ENCODE measurements at regions of chr10 and their contacts with region 1.

Region 1: DNA sequence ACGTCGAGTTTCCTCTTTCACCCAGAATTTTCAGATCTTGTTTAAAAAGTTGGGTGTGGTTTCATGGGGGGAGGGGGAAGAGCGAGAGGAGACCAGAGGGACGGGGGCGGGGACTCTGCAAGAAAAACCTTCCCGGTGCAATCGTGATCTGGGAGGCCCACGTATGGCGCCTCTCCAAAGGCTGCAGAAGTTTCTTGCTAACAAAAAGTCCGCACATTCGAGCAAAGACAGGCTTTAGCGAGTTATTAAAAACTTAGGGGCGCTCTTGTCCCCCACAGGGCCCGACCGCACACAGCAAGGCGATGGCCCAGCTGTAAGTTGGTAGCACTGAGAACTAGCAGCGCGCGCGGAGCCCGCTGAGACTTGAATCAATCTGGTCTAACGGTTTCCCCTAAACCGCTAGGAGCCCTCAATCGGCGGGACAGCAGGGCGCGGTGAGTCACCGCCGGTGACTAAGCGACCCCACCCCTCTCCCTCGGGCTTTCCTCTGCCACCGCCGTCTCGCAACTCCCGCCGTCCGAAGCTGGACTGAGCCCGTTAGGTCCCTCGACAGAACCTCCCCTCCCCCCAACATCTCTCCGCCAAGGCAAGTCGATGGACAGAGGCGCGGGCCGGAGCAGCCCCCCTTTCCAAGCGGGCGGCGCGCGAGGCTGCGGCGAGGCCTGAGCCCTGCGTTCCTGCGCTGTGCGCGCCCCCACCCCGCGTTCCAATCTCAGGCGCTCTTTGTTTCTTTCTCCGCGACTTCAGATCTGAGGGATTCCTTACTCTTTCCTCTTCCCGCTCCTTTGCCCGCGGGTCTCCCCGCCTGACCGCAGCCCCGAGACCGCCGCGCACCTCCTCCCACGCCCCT is at the start of gene VIM:
- DNase-seq: peak; percentile 97
- H3K4me3 ChIP-seq: peak within 1 kb of the TSS; percentile 99
- H3K27ac ChIP-seq: peak within 1 kb of the TSS; percentile 99
- H3K27me3 ChIP-seq: no peaks in the 10 kb centered on the region
- CTCF ChIP-seq: peak; percentile 28

Region 2: DNA sequence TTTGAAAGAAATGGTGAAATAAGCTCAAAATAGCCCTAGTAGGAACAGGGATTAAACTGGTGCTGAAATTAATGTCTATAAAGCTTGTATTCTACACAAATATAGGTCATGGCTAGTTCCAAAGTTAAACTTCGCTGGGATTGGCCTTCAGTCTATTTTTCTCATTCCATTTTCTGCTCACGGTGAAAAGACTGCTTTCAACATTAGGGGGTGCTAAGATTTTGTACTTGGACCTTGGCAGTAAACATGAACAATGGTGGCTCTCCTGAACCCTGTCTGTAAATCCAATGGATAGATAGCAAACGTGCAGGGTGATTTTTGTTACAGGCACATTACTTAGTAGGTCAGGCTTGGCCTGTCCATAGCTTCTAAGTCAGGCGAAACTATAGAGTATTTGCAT is 375.1 kb before region 1 on chr10:
- in situ Hi-C with region 1: loop called (anchors 25 kb)
- DNase-seq: peak; percentile 58
- H3K4me3 ChIP-seq: no peak overlapping the region
- H3K27ac ChIP-seq: no peak overlapping the region
- H3K27me3 ChIP-seq: no peaks in the 10 kb centered on the region
- CTCF ChIP-seq: peak; percentile 64

Measured in brain microvascular endothelial cell (primary cell).